ENCODE measurements at regions of chr1 and their contacts with region 1.

Region 1: DNA sequence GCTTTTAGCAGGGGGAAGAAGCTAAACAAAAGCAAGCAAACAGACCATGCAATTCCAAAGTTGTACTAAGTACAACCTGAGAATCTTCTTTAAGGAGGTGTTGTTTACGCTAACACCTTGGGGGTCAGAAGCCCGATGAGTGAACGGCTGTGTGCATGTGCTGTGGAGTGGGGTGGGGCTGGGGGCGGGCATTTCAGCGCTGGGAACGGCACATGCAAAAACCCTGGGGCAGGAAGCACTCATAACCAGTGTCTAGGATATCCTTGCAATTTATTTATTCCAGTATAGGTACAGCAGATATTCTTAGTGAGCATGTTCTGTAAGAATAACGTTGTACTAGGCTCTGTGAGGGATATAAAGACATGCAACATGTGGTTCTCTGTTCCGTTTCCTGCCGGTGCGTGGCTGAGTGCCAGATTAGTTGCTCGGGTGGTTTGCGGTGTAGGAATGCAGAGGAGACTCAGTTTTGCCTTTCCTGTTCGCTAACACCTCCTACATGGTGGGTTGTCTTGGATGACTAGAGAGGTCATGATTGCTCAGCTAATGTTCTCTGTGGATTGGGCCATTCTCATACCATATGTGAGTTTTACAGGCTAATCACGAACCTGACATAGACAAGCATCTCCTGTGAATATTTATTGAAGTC is 3.7 kb downstream of the FASLG start:
- DNase-seq: peak; percentile 96
- H3K4me3 Mint-ChIP-seq: peak overlapping the region; percentile 26
- H3K27ac Mint-ChIP-seq: peak overlapping the region; percentile 60
- H3K4me1 Mint-ChIP-seq: peaks cover 68% of the 10 kb centered on the region
- H3K27me3 Mint-ChIP-seq: peaks cover 3% of the 10 kb centered on the region

Region 2: GRCh38 chr1:172686143-172686542 is 23.6 kb after region 1 on chr1:
- CTCF ChIA-PET with region 1: no interaction called
- intact Hi-C with region 1: no loop called
- DNase-seq: no peak
- H3K4me3 Mint-ChIP-seq: no peak overlapping the region
- H3K27ac Mint-ChIP-seq: no peak overlapping the region
- H3K4me1 Mint-ChIP-seq: peaks cover 2% of the 10 kb centered on the region
- H3K27me3 Mint-ChIP-seq: no peaks in the 10 kb centered on the region

Region 3: GRCh38 chr1:172699111-172699510 is 36.5 kb after region 1 on chr1:
- CTCF ChIA-PET with region 1: no interaction called
- intact Hi-C with region 1: loop called (anchors 1 kb)
- DNase-seq: peak; percentile 88
- H3K4me3 Mint-ChIP-seq: peak overlapping the region; percentile 36
- H3K27ac Mint-ChIP-seq: peak overlapping the region; percentile 89
- H3K4me1 Mint-ChIP-seq: peaks cover 53% of the 10 kb centered on the region
- H3K27me3 Mint-ChIP-seq: no peaks in the 10 kb centered on the region

Region 4: GRCh38 chr1:172708452-172708851 is 45.9 kb after region 1 on chr1:
- CTCF ChIA-PET with region 1: no interaction called
- intact Hi-C with region 1: loop called (anchors 2 kb)
- DNase-seq: peak; percentile 55
- H3K4me3 Mint-ChIP-seq: no peak overlapping the region
- H3K27ac Mint-ChIP-seq: no peak overlapping the region
- H3K4me1 Mint-ChIP-seq: peaks cover 24% of the 10 kb centered on the region
- H3K27me3 Mint-ChIP-seq: no peaks in the 10 kb centered on the region

Region 5: GRCh38 chr1:172870901-172871606 is 208.5 kb after region 1 on chr1:
- CTCF ChIA-PET with region 1: no interaction called
- intact Hi-C with region 1: no loop called
- DNase-seq: no peak
- H3K4me3 Mint-ChIP-seq: no peak overlapping the region
- H3K27ac Mint-ChIP-seq: no peak overlapping the region
- H3K4me1 Mint-ChIP-seq: peaks cover 32% of the 10 kb centered on the region
- H3K27me3 Mint-ChIP-seq: peaks cover 24% of the 10 kb centered on the region

Measured in activated naive CD4-positive, alpha-beta T cell treated with anti-CD3 and anti-CD28 coated beads for 36 hours (primary cell).